ENCODE measurements at regions of chr20 and their contacts with region 1.

Region 1: GRCh38 chr20:2742934-2743559 is 50.5 kb downstream of the EBF4 start:
- DNase-seq: peak; percentile 54
- H3K4me3 ChIP-seq: no peak overlapping the region
- H3K27ac ChIP-seq: no peak overlapping the region
- H3K4me1 ChIP-seq: no peaks in the 10 kb centered on the region
- H3K27me3 ChIP-seq: peaks cover 8 to 20% of the 10 kb centered on the region in 2 experiments
- CTCF ChIP-seq: peak; percentile 88 to 97
- POLR2A ChIP-seq: no peak

Region 2: GRCh38 chr20:2713285-2713684 is 29.8 kb before region 1 on chr20:
- CTCF ChIA-PET with region 1: interaction called, 10 read pairs
- POLR2A ChIA-PET with region 1: no interaction called
- dilution Hi-C with region 1: no loop called
- intact Hi-C with region 1: no loop called
- DNase-seq: no peak
- H3K4me3 ChIP-seq: no peak overlapping the region
- H3K27ac ChIP-seq: no peak overlapping the region
- H3K4me1 ChIP-seq: no peaks in the 10 kb centered on the region
- H3K27me3 ChIP-seq: peaks cover 8 to 14% of the 10 kb centered on the region in 2 experiments
- CTCF ChIP-seq: no peak
- POLR2A ChIP-seq: no peak

Region 3: DNA sequence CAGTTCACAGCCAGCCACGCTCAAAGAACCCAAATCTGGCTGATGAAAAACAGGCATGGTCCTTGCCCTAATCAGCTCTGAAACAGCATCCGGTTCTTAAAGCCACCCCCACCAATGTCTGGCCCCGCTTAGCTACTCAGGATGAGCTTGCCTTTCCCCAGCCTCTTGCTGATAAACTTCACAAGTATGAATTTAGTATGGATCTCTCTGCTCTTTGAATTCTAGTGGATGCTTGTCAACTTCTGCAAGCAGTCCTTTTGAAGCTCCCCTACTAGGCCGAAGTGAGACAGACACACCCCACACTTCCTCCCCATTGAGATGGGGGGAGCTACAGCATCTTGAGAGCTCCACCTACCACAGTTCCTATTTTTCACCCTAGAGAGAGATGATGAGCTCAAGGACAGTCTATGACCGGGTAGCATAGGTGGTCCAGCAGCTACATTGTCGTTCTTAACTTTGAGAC is 13.8 kb before region 1 on chr20:
- CTCF ChIA-PET with region 1: interaction called, 16 read pairs
- POLR2A ChIA-PET with region 1: no interaction called
- dilution Hi-C with region 1: no loop called
- intact Hi-C with region 1: no loop called
- DNase-seq: no peak
- H3K4me3 ChIP-seq: no peak overlapping the region
- H3K27ac ChIP-seq: no peak overlapping the region
- H3K4me1 ChIP-seq: no peaks in the 10 kb centered on the region
- H3K27me3 ChIP-seq: peaks cover 12 to 37% of the 10 kb centered on the region in 2 experiments
- CTCF ChIP-seq: no peak
- POLR2A ChIP-seq: no peak

Region 4: DNA sequence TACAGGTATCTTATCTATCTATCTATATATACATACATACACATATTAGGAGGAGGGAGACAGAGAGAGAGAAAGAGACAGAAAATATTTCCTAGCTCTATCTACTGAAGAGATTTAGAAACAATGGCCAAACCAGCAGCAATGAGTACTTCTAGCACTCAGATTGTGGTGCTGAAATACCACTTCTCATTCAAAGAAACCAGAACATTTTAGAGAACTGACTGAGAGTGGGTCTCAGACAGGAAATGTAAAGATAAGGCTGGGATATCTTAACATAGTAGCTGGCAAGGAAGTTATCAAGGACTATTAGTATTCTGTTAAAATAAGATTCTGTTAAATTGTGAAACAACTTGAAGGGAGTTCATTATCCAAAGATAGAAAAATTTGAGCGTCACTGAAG is 607.4 kb after region 1 on chr20:
- CTCF ChIA-PET with region 1: no interaction called
- POLR2A ChIA-PET with region 1: no interaction called
- dilution Hi-C with region 1: no loop called
- intact Hi-C with region 1: no loop called
- DNase-seq: no peak
- H3K4me3 ChIP-seq: no peak overlapping the region
- H3K27ac ChIP-seq: no peak overlapping the region
- H3K4me1 ChIP-seq: no peaks in the 10 kb centered on the region
- H3K27me3 ChIP-seq: no peaks in the 10 kb centered on the region
- CTCF ChIP-seq: no peak
- POLR2A ChIP-seq: no peak

Measured in endothelial cell of umbilical vein (primary cell).